Posterior cingulate gyrus (tissue), 11 donors: ENCODE measurements at regions of chr1 and their contacts with region 1.

Region 1: DNA sequence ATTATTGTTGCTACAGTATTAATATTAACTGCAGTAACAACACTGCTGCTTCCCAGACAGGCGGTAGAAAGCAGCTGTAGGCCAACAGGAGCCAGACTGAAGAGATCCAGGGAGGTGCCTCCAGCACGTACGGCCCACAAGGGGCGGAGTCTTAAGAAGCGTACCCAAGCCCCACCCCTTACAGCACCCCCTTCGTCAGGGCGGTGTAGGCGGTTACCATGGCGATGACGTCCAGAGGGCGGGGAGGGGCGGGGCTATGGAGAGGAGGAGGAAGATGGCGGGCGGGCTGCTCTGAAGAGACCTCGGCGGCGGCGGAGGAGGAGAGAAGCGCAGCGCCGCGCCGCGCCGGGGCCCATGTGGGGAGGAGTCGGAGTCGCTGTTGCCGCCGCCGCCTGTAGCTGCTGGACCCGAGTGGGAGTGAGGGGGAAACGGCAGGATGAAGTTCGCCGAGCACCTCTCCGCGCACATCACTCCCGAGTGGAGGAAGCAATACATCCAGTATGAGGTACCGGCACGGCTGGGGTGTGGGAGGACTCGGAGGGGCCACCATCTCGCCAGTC is at the start of gene XPR1:
- DNase-seq: peak; percentile 95 to 100 (median 98)

Region 2: GRCh38 chr1:180502360-180503273 is 129.2 kb before region 1 on chr1 and contains the start of gene ACBD6:
- intact Hi-C with region 1: loop called (anchors 2 kb)
- DNase-seq: peak; percentile 81 to 97 (median 84)

Region 3: GRCh38 chr1:180533266-180533987 is 98.4 kb before region 1 on chr1:
- intact Hi-C with region 1: loop called (anchors 10 kb)
- DNase-seq: peak in 8 of 10 donors; percentile 32 to 92 (median 68)

Region 4: GRCh38 chr1:180863158-180863775 is 231.4 kb after region 1 on chr1:
- intact Hi-C with region 1: loop called (anchors 5 kb)
- DNase-seq: peak in 1 of 10 donors; percentile 34